ENCODE measurements at regions of chr7 and their contacts with region 1.

Region 1: GRCh38 chr7:80134536-80135320 is at the start of gene GNAI1:
- DNase-seq: peak; percentile 94
- H3K4me3 ChIP-seq: peak within 1 kb of the TSS; percentile 77 to 93 (median 87)
- H3K27ac ChIP-seq: peak within 1 kb of the TSS; percentile 92
- H3K4me1 ChIP-seq: peaks cover 28% of the 10 kb centered on the region
- H3K27me3 ChIP-seq: no peaks in the 10 kb centered on the region
- CTCF ChIP-seq: peak; percentile 35 to 47
- total RNA-seq, gene GNAI1: 39.6 to 39.8 TPM

Region 2: GRCh38 chr7:80060218-80060806 is 74.4 kb before region 1 on chr7:
- CTCF ChIA-PET with region 1: interaction called, 3 read pairs
- dilution Hi-C with region 1: no loop called
- in situ Hi-C with region 1: no loop called
- intact Hi-C with region 1: loop called (anchors 2 kb)
- DNase-seq: peak; percentile 43
- H3K4me3 ChIP-seq: no peak overlapping the region
- H3K27ac ChIP-seq: no peak overlapping the region
- H3K4me1 ChIP-seq: no peaks in the 10 kb centered on the region
- H3K27me3 ChIP-seq: no peaks in the 10 kb centered on the region
- CTCF ChIP-seq: peak; percentile 38 to 51

Region 3: GRCh38 chr7:80114159-80114558 is 20.6 kb before region 1 on chr7:
- CTCF ChIA-PET with region 1: no interaction called
- dilution Hi-C with region 1: no loop called
- in situ Hi-C with region 1: no loop called
- intact Hi-C with region 1: no loop called
- DNase-seq: no peak
- H3K4me3 ChIP-seq: no peak overlapping the region
- H3K27ac ChIP-seq: no peak overlapping the region
- H3K4me1 ChIP-seq: no peaks in the 10 kb centered on the region
- H3K27me3 ChIP-seq: no peaks in the 10 kb centered on the region
- CTCF ChIP-seq: no peak

Region 4: DNA sequence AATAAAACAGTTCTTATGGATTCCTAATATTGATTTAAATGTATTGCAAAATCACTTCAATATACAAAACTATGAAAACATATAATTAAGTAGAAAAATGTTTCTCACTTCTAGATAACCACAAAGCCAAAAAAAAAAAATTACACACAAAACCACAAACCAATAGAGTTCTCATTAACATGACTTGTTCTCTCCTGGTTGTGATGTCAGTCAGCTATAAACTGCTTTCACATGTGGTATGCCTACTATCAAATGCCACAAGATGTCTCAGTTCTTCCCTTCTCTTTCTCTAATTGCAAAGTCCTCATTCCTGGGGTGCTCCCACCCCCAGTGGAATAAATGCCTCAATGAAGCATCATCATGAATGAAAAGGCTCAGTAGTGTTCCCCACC is 16.5 kb after region 1 on chr7:
- CTCF ChIA-PET with region 1: interaction called, 3 read pairs
- dilution Hi-C with region 1: no loop called
- in situ Hi-C with region 1: no loop called
- intact Hi-C with region 1: loop called (anchors 1 kb)
- DNase-seq: peak; percentile 87
- H3K4me3 ChIP-seq: peak overlapping the region in 1 of 3 experiments; percentile 6
- H3K27ac ChIP-seq: peak overlapping the region; percentile 83
- H3K4me1 ChIP-seq: peaks cover 41% of the 10 kb centered on the region
- H3K27me3 ChIP-seq: no peaks in the 10 kb centered on the region
- CTCF ChIP-seq: peak; percentile 1 to 17

Region 5: GRCh38 chr7:80218723-80219122 is 84.0 kb after region 1 on chr7:
- CTCF ChIA-PET with region 1: interaction called, 6 read pairs
- dilution Hi-C with region 1: no loop called
- in situ Hi-C with region 1: no loop called
- intact Hi-C with region 1: loop called (anchors 1 kb)
- DNase-seq: peak; percentile 94
- H3K4me3 ChIP-seq: no peak overlapping the region
- H3K27ac ChIP-seq: peak overlapping the region; percentile 77
- H3K4me1 ChIP-seq: peaks cover 9% of the 10 kb centered on the region
- H3K27me3 ChIP-seq: no peaks in the 10 kb centered on the region
- CTCF ChIP-seq: no peak

Region 6: DNA sequence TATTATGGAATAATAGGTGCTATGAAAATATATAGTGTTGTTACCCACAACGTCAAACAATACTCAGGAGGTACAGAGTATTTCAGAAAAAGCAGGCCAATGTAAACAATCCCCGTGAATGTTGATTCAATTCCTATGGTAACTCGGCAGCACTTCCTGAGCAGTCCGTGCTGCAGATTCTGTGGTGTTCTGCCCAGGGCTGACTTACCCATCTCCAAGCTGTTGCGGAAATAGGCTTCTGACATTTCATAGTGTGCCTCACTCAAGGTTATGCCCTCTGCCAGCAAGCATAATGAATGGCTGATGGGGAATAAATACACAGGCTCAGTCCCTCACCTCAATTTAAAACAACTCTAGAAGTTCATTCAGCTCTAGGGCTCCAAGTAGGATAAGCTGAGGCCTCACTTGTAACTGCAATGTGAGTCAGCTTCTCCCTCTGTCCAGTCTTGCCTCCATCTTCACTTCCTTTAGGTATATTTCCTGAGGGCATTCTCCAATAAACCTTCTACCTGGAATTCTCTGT is 177.5 kb after region 1 on chr7:
- CTCF ChIA-PET with region 1: interaction called, 12 read pairs
- dilution Hi-C with region 1: no loop called
- in situ Hi-C with region 1: no loop called
- intact Hi-C with region 1: loop called (anchors 10 kb)
- DNase-seq: peak; percentile 78
- H3K4me3 ChIP-seq: peak overlapping the region in 2 of 3 experiments; percentile 15 to 29
- H3K27ac ChIP-seq: peak overlapping the region; percentile 99
- H3K4me1 ChIP-seq: peaks cover 20% of the 10 kb centered on the region
- H3K27me3 ChIP-seq: no peaks in the 10 kb centered on the region
- CTCF ChIP-seq: peak in 1 of 2 donors; percentile 6

Region 7: GRCh38 chr7:80453699-80454340 is 319.1 kb after region 1 on chr7:
- CTCF ChIA-PET with region 1: no interaction called
- dilution Hi-C with region 1: no loop called
- in situ Hi-C with region 1: no loop called
- intact Hi-C with region 1: loop called (anchors 2 kb)
- DNase-seq: no peak
- H3K4me3 ChIP-seq: no peak overlapping the region
- H3K27ac ChIP-seq: no peak overlapping the region
- H3K4me1 ChIP-seq: peaks cover 4% of the 10 kb centered on the region
- H3K27me3 ChIP-seq: no peaks in the 10 kb centered on the region
- CTCF ChIP-seq: peak; percentile 38 to 39

Region 8: DNA sequence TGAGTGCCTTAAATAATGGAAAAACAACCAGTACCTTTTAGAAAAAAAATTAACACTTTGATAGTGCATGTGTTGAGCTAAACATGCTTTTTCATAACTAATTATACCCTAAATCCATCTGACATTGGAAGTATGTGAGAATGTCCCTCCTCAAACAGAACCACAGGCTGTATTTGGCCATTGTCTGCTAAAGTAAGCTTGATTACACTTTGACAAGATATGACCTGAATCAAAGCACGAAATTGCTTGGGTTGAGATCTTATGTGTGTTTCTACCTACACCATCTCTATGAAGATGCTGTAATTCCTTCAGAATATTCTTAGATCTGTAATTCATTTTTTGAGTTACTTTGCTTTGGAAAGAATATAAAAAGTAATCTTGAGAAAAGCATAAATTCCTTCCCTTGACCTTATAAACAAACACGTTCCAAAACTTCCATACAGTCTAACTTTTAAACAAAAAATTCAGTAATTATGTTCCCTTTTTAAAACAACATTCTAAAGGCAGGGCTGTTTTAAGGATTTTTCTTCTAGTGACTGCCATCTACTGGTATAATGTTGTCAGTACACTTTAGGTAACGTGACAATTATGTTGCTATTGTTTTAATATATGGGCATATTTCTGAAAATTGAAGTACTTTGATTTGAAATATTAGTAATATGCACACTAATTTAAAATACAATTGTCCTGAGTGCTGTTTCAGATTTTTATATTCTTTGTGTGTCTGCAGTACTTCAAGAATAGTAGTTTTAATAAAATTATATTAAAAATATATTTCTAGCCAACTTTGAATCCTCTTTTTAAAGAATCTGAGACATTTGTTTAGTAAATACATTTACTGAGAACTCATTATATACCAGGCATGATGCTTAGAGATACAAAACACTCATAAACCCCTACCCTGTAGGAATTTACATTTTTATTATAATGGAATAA is 524.7 kb after region 1 on chr7:
- CTCF ChIA-PET with region 1: no interaction called
- dilution Hi-C with region 1: no loop called
- in situ Hi-C with region 1: no loop called
- intact Hi-C with region 1: loop called (anchors 5 kb)
- DNase-seq: peak; percentile 20
- H3K4me3 ChIP-seq: no peak overlapping the region
- H3K27ac ChIP-seq: no peak overlapping the region
- H3K4me1 ChIP-seq: no peaks in the 10 kb centered on the region
- H3K27me3 ChIP-seq: no peaks in the 10 kb centered on the region
- CTCF ChIP-seq: peak; percentile 61 to 64

Measured in mammary epithelial cell (primary cell).